Right ventricle myocardium superior (tissue), 1 donor: ENCODE measurements at regions of chr1 and their contacts with region 1.

Region 1: GRCh38 chr1:169106095-169106920 is at the start of gene ATP1B1:
- DNase-seq: peak; percentile 92
- ATAC-seq: peak; percentile 85
- total RNA-seq, gene ATP1B1: 302 TPM

Region 2: GRCh38 chr1:168373869-168374268 is 732.4 kb before region 1 on chr1:
- intact Hi-C with region 1: no loop called
- DNase-seq: no peak
- ATAC-seq: no peak

Region 3: DNA sequence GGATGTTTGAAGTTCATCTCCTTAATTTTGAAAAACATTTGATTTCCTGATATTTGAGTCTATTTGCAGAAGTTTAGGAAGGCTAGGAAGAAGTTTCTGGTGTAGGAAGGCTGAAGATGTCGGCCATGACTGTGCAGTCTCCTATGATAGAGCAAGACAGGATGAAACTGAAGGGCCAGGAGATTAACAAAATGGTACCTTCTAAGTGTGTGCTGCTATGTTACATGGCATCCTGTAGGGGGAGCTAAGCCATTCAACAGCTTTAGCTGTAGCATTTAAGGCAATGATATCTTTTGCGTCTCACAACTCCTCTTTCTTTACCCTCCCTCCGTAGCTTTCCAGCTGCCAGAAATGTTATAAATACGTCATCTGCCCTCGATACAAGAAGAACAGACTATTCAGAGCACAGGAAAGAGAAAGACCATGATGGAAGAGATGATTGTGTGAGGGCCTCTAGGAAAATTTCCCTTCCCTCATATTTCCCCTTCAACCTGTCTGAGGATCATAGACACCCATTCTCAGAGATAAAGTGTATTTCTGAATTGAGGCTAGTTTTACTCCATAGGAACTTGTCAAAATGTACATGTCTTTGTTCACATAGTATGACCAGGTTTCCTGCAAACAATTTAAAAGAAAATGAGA is 468.8 kb before region 1 on chr1:
- intact Hi-C with region 1: loop called (anchors 10 kb)
- DNase-seq: no peak
- ATAC-seq: peak; percentile 29

Region 4: DNA sequence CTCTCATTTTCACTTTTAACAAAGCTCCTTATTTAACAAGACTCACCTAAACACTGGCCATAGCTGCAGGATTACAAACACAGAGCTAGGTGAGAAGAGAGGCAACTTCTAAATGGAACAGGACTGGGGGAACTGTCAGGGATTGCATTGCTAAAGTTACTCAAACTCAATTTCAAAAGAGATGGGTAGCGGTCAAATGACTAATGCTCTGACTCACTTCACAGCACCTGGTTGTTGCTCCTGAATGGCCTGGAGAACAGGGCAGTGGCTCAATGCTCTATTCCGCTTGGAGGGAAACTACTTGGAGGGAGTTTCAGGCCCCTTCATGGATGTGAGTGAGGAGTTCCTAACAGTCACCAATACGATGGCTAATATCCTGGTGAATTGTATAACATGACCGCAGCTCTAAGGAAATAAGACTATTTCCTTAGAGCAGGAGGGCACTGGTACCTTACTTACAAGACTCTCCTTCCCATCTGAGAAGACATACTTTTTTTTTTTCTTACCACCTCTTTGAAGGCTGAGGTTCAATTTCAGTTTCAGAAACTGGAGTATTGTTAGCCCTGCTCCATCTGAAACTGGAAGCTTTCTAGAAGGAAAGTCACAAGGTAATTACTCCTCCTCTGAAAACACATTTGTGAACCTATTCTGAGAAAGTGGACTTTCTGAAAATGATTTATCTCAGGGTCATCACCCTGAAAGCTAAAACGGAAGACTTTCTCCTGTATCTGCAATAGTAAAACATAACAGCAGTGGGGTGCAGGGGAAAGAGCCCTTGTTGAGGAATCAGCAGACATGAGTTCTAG is 386.8 kb before region 1 on chr1:
- intact Hi-C with region 1: loop called (anchors 10 kb)
- DNase-seq: no peak
- ATAC-seq: no peak

Region 5: GRCh38 chr1:168834225-168834872 is 272.0 kb before region 1 on chr1:
- intact Hi-C with region 1: loop called (anchors 10 kb)
- DNase-seq: no peak
- ATAC-seq: peak; percentile 70

Region 6: DNA sequence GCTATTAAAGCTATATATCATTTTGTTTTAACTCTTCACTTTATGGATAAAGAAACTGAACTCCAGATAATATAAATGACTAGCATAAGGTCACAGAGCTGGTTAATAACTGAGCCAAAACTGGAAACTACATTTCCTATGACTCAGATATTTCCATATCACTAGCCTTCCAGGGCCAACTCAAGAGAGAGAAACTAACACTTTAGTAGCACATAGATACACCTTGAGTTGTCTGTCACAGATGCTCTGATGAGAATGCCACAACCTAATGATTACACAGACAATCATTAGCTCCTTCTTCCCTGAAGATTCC is 220.6 kb after region 1 on chr1:
- intact Hi-C with region 1: no loop called
- DNase-seq: no peak
- ATAC-seq: no peak

Region 7: DNA sequence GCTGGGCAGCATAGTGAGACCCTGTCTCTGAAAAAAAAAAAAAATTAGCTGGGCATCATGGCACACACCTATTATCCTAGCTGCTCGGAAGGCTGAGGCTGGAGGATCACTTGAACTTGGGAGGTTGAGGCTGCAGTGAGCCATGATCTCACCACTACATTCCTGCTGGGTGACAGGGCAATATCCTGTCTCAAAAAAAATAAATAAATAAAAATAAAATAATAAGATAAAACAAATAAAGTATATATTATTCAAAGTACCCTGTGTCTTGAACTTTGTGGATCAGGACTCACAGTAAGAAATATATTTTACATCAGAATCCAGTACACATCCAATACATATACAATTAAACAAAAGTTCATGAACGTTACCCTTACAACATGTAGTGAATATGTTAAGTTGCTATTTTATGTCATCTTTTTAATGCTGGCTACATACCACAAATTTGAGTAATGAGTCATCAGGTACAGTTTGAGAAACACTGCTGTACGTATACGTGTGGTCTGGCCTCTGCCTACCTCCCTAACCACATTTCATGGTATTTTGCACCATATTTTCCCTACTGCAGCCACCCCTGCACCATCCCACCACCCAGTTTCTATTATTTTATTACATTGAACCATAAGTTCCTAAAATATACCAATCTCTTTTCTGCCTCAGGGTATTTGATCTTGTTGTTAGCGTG is 256.9 kb after region 1 on chr1:
- intact Hi-C with region 1: no loop called
- DNase-seq: no peak
- ATAC-seq: no peak

Region 8: GRCh38 chr1:169538998-169539871 is 432.9 kb after region 1 on chr1:
- intact Hi-C with region 1: no loop called
- DNase-seq: no peak
- ATAC-seq: no peak